ENCODE measurements at regions of chr17 and their contacts with region 1.

Region 1: DNA sequence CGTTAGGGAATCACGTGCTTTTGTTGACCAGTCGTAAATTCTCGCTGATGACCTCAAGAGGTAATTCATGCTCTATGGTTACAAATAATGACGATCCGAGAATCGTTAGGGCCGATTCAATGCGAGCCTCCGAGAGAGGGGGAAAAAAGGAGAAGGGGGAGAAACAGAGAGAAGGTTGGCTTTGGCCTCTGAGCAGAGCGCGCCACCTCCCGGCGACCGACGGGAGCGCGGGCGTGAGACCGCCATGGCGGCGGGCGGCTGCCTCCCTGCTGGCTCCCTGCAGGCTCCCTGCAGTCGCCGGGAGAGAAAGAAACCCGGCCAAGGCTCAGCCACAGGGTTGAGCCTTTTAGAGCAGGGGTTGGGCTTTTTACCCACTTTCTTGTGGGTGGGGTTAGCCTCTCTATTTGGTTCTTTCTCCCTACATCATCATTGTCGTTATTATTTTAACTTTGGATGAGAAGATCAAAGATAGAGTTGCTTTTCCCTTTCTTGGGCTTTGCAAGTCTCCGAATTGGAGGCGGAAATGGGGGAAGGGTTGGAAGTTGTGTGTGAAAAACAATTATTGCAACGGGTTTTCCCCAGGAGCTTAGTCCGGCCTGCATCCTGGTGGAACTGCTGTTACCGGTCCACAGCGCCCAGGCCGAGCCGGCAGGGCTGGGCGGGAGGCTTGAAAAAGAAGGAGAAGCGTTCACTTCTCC is 410 bp upstream of the HOXB5 start:
- DNase-seq: peak; percentile 86
- ATAC-seq: peak; percentile 60
- H3K4me3 Mint-ChIP-seq: peak overlapping the region; percentile 73
- H3K27ac Mint-ChIP-seq: no peak overlapping the region
- H3K4me1 Mint-ChIP-seq: peaks cover 38% of the 10 kb centered on the region
- H3K27me3 Mint-ChIP-seq: peaks cover 85% of the 10 kb centered on the region

Region 2: DNA sequence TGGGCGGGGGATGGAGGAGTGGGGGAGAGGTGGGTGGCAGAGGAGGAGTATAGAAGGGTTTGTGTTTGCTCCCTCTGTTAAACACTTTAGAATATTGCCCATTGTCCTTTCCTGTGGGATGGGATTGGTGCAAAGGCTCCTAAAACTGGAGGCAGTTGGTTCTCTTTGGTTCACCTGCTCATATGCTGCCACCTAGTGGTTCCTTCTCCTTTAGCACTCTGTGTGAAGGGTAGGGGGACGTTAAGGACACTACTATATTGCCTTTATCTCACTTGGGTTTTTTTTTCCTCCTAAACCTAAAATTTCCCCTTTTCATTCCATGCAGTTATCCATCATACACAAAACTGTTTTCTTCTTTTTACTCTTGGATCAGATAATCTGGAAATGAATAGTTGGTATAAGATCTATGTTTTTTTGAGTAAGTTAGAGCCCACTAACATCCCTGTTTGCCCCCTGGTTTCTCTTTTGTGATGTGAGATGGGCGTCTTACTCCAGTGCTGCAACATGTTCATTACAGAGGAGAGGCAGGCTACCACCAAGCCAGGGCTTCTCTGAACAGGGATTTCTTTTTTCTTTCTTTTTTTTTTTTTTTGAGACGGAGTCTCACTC is 462.7 kb before region 1 on chr17:
- CTCF ChIA-PET with region 1: interaction called, 10 read pairs
- DNase-seq: peak; percentile 57
- ATAC-seq: peak; percentile 67
- H3K4me3 Mint-ChIP-seq: no peak overlapping the region
- H3K27ac Mint-ChIP-seq: no peak overlapping the region
- H3K4me1 Mint-ChIP-seq: no peaks in the 10 kb centered on the region
- H3K27me3 Mint-ChIP-seq: no peaks in the 10 kb centered on the region

Region 3: DNA sequence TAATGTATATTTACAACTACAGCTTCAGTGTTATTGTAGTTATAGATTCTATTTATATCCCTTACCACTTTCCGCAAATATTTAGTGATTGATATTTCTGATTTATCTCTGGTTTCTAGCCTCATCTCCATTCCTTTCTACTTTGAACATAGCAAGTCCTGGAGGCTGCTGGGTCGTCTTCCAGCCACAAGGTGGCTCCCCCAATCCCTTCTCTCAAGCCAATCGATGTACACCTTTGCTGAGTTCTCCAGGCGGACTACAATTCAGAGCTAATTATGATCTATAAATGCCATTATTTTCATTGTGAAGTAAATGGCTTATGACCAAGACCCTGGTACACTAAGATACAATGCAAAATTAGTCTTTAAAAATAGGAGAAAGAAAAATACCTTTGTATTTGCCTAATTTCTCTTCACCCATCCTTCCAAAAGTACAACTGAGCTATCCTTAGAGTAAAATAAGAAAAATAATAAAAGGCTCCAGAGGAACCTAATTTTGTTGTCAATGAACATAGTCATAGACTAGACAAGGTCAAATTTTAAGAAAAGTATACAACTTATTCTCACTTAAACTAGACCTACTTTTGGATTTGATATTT is 286.1 kb before region 1 on chr17:
- CTCF ChIA-PET with region 1: interaction called, 22 read pairs
- DNase-seq: peak; percentile 67
- ATAC-seq: peak; percentile 71
- H3K4me3 Mint-ChIP-seq: no peak overlapping the region
- H3K27ac Mint-ChIP-seq: no peak overlapping the region
- H3K4me1 Mint-ChIP-seq: peaks cover 4% of the 10 kb centered on the region
- H3K27me3 Mint-ChIP-seq: no peaks in the 10 kb centered on the region

Region 4: DNA sequence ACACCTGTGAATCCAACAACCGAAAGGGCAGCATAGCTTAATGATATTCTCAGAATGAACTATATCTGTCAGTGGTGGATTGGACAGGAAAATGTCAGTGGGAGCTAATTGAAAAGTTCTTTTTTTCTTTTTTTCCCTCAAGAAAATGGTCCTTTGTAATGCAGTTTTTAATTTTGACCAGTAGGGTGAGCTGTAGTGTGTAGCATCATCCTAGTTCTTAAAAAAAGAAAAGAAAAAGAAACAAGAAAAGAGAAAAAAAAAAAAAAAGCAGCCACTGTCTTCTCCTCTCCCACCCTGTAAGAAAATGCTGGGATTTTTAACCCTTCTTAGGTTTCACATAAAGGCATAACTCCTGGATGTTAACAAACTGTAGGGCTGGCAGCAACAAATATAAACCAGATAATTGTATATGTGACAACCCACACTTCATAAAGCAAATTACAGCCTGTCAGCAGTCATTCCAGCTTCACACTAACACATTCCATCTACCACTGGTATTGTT is 242.1 kb before region 1 on chr17:
- CTCF ChIA-PET with region 1: interaction called, 33 read pairs
- DNase-seq: no peak
- ATAC-seq: peak; percentile 30
- H3K4me3 Mint-ChIP-seq: no peak overlapping the region
- H3K27ac Mint-ChIP-seq: no peak overlapping the region
- H3K4me1 Mint-ChIP-seq: peaks cover 14% of the 10 kb centered on the region
- H3K27me3 Mint-ChIP-seq: no peaks in the 10 kb centered on the region

Region 5: GRCh38 chr17:48492401-48493298 is 101.3 kb before region 1 on chr17:
- CTCF ChIA-PET with region 1: interaction called, 18 read pairs
- DNase-seq: peak; percentile 76
- ATAC-seq: peak; percentile 95
- H3K4me3 Mint-ChIP-seq: peak overlapping the region; percentile 46
- H3K27ac Mint-ChIP-seq: peak overlapping the region; percentile 24
- H3K4me1 Mint-ChIP-seq: peaks cover 35% of the 10 kb centered on the region
- H3K27me3 Mint-ChIP-seq: peaks cover 16% of the 10 kb centered on the region

Region 6: DNA sequence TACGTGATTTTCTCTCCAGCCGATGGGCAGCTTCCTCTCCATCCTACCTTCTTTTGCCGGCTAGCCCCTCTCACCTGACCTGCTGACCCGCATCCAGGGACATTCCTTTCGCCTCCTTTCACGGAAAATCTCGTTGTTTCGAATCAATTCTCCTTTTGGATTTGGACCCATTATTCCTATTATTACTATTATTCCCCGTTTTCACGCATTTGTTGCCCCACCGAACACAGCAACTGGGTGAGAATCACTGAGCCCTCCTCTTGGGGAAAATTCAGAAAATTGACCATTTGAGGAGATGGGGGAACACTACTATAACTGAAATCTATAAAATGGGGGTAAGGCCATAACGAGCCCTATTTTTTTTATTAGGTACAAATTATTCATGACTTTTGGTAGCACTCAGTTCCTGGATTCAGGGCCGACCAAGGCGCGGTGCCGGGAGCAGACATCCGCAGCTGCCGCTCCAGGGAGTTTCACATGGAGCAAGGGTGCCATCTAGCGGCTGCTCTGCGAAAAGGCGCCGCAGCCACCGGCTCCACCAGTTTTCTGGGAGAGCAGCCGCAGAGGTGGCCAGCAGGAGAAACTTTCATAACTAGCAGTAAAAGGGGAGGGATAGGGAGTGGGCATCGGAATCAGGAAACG is 24.4 kb after region 1 on chr17:
- CTCF ChIA-PET with region 1: interaction called, 10 read pairs
- DNase-seq: peak; percentile 86
- ATAC-seq: peak; percentile 76
- H3K4me3 Mint-ChIP-seq: peak overlapping the region; percentile 31
- H3K27ac Mint-ChIP-seq: peak overlapping the region; percentile 36
- H3K4me1 Mint-ChIP-seq: peaks cover 34% of the 10 kb centered on the region
- H3K27me3 Mint-ChIP-seq: peaks cover 96% of the 10 kb centered on the region

Region 7: GRCh38 chr17:48704361-48705248 is 110.6 kb after region 1 on chr17:
- CTCF ChIA-PET with region 1: no interaction called
- DNase-seq: no peak
- ATAC-seq: no peak
- H3K4me3 Mint-ChIP-seq: no peak overlapping the region
- H3K27ac Mint-ChIP-seq: no peak overlapping the region
- H3K4me1 Mint-ChIP-seq: no peaks in the 10 kb centered on the region
- H3K27me3 Mint-ChIP-seq: peaks cover 73% of the 10 kb centered on the region

Measured in activated CD8-positive, alpha-beta memory T cell treated with anti-CD3 and anti-CD28 coated beads, Interleukin-2, amount 10 ng/mL, durations not matched to agents 7 days and 5 days (primary cell).